ENCODE measurements at regions of chr3 and their contacts with region 1.

Region 1: DNA sequence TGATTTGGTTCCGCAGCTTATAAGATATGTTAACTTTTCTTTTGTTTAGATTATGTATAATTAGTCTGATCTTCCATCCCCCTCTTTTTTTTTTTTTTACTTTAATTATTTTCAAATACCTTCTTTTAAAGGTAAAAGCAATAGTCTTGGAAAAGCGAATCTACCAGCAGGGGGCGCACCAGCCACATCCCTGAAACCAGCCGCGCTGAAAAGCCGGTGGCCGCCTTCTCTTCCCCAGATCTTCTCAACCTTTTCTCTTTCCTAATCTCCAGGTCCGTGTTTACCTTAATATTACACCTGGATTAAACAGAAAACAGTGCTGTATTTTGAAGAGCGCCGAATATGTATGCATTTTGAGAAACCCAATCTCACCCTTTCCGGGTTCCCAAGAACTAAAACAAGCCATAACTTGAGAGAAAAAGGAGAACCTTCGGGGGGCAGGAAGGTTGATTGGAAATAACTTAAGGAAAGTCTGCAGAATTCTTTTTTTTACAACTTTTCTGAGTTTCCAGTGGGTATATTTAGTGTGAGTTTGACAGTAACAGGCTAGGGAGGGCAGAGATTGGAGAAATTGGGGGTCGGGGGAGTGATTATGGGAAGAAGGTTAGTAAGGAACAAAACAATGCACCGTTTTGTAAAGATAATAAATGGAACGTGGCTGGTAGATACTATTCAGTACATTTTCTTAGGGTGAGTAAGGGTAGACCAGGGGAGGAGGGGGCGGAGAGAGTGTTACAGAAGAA is 2.0 kb upstream of the SOX2 start:
- DNase-seq: peak; percentile 92
- H3K4me3 Mint-ChIP-seq: peak overlapping the region; percentile 45
- H3K27ac Mint-ChIP-seq: peak overlapping the region; percentile 11
- H3K4me1 Mint-ChIP-seq: peaks cover 22% of the 10 kb centered on the region
- H3K27me3 Mint-ChIP-seq: peaks cover 11% of the 10 kb centered on the region
- CTCF ChIP-seq: peak; percentile 94

Region 2: GRCh38 chr3:181694805-181695660 is 14.7 kb before region 1 on chr3:
- CTCF ChIA-PET with region 1: no interaction called
- intact Hi-C with region 1: no loop called
- DNase-seq: peak; percentile 81
- H3K4me3 Mint-ChIP-seq: peak overlapping the region; percentile 74
- H3K27ac Mint-ChIP-seq: peak overlapping the region; percentile 34
- H3K4me1 Mint-ChIP-seq: peaks cover 27% of the 10 kb centered on the region
- H3K27me3 Mint-ChIP-seq: peaks cover 43% of the 10 kb centered on the region
- CTCF ChIP-seq: peak; percentile 48

Region 3: GRCh38 chr3:181892848-181893247 is 183.1 kb after region 1 on chr3:
- CTCF ChIA-PET with region 1: interaction called, 4 read pairs
- intact Hi-C with region 1: loop called (anchors 5 kb)
- DNase-seq: no peak
- H3K4me3 Mint-ChIP-seq: no peak overlapping the region
- H3K27ac Mint-ChIP-seq: no peak overlapping the region
- H3K4me1 Mint-ChIP-seq: no peaks in the 10 kb centered on the region
- H3K27me3 Mint-ChIP-seq: no peaks in the 10 kb centered on the region
- CTCF ChIP-seq: no peak

Region 4: GRCh38 chr3:181948286-181948685 is 238.6 kb after region 1 on chr3:
- CTCF ChIA-PET with region 1: interaction called, 3 read pairs
- intact Hi-C with region 1: loop called (anchors 2 kb)
- DNase-seq: peak; percentile 53
- H3K4me3 Mint-ChIP-seq: no peak overlapping the region
- H3K27ac Mint-ChIP-seq: no peak overlapping the region
- H3K4me1 Mint-ChIP-seq: no peaks in the 10 kb centered on the region
- H3K27me3 Mint-ChIP-seq: no peaks in the 10 kb centered on the region
- CTCF ChIP-seq: peak; percentile 49

Region 5: DNA sequence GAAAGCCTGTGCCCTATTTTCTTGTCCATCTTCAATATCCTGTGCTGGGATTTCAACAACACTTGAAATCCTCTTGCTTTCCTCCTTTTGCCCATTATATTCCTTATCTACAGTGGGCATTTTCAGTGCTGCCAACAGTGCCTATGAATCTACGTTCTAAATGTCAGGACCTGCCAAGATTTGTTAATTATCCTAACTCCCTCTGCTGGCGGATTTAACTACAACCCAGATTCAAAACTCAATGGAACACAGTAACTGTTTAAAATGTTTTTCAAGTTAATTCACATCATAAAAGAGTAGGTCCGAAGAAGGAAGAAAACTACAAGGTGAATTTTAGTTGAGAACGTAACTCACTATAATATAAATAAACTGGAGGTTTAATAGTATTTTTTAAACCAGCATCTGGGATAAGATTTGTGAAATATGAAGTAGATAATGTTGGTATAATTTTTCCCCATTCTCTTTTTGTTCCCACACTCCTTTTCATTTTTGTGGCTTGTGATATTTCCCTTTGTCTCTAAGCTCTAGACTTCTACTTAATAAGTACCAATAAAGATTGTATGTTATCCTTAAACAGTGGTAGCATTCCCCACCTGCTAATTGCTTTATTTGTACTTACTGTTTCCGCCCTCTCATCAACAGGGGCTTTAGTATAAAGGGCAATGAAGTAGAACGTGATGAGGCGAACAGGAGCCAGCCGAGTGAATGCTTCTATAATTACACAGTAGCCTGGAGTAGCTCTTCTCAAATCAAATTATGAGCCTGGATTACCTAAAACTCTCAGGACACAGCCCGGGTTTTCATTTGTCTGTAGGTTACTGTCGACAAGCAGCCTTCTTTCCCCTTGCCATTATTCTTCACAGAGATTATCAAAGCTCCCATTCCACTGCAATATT is 781.1 kb after region 1 on chr3:
- CTCF ChIA-PET with region 1: no interaction called
- intact Hi-C with region 1: loop called (anchors 1 kb)
- DNase-seq: peak; percentile 54
- H3K4me3 Mint-ChIP-seq: no peak overlapping the region
- H3K27ac Mint-ChIP-seq: no peak overlapping the region
- H3K4me1 Mint-ChIP-seq: peaks cover 24% of the 10 kb centered on the region
- H3K27me3 Mint-ChIP-seq: no peaks in the 10 kb centered on the region
- CTCF ChIP-seq: peak; percentile 70

Measured in Calu3 (cell line).